ENCODE measurements at regions of chr18 and their contacts with region 1.

Region 1: GRCh38 chr18:49447810-49448745 is 12.4 kb downstream of the DYM start:
- DNase-seq: peak; percentile 46
- H3K4me3 Mint-ChIP-seq: no peak overlapping the region
- H3K27ac Mint-ChIP-seq: no peak overlapping the region
- H3K4me1 Mint-ChIP-seq: peaks cover 2% of the 10 kb centered on the region
- H3K27me3 Mint-ChIP-seq: no peaks in the 10 kb centered on the region

Region 2: GRCh38 chr18:49431165-49431962 is 16.7 kb before region 1 on chr18:
- CTCF ChIA-PET with region 1: interaction called, 20 read pairs
- POLR2A ChIA-PET with region 1: no interaction called
- DNase-seq: no peak
- H3K4me3 Mint-ChIP-seq: no peak overlapping the region
- H3K27ac Mint-ChIP-seq: no peak overlapping the region
- H3K4me1 Mint-ChIP-seq: no peaks in the 10 kb centered on the region
- H3K27me3 Mint-ChIP-seq: no peaks in the 10 kb centered on the region

Measured in activated CD4-positive, alpha-beta memory T cell treated with anti-CD3 and anti-CD28 coated beads, Interleukin-2, amount 10 ng/mL, durations not matched to agents 7 days and 5 days (primary cell).